ENCODE measurements at regions of chr11 and their contacts with region 1.

Region 1: GRCh38 chr11:65117216-65118096 is at the start of gene ZNHIT2:
- DNase-seq: peak; percentile 99 to 100
- ATAC-seq: peak; percentile 85 to 93 (median 90)
- H3K4me3 ChIP-seq: peak within 1 kb of the TSS; percentile 54 to 99 (median 91)
- H3K27ac ChIP-seq: peak within 1 kb of the TSS in 9 of 10 donors; percentile 66 to 95 (median 86)
- H3K4me1 ChIP-seq: peaks cover 17 to 72% (median 49%) of the 10 kb centered on the region in 9 donors
- H3K27me3 ChIP-seq: peaks cover 0 to 10% (median 0%) of the 10 kb centered on the region in 7 donors
- CTCF ChIP-seq: peak; percentile 79 to 99 (median 95)
- total RNA-seq, gene ZNHIT2: 4.3 to 8.3 (median 6.5) TPM

Region 2: DNA sequence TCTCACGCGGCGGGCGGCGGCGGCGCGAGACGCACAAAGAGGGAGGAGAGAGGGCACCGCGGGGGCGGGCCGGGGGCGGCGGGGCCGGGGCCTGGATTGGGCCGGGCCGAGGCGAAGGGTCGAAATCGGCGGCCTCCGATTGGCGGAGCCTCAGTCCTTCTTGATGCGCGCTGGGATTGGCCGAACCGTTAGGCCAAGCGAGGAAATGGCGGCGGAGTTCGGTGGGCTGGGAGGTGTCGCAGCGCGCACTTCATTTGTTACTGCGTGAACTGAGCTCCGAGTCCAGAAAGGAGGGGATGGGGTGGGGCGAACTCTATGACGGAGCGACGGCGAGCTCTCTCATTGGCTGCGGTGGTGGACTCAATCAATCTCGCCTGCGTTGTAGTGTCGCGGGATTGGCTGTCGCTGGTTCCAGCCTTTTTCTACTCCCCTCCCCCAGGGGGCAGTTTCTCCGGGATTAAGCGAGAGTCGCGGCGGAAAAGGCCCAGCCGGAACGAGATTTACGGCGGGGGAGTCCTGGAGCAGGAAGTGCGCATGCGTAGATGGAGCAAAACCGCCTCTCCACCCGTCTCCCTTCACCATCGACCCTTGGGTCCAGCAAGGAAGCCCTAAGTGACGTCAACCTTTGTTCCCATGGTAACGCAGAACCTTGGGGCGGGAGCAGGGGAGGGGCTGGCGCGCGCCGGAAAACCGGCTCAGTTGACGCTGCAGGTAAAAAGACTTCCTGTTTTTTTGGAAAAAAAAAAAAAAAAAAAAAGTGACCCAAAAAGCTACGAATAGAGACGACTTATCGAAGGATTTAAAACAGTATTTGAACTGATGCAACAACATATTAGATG is 338.7 kb before region 1 on chr11 and contains the start of gene SF1:
- intact Hi-C with region 1: loop called in 2 of 10 experiments (anchors 10 kb)
- DNase-seq: peak; percentile 96 to 100
- ATAC-seq: peak; percentile 94 to 97 (median 96)
- H3K4me3 ChIP-seq: peak within 1 kb of the TSS; percentile 65 to 99 (median 89)
- H3K27ac ChIP-seq: peak within 1 kb of the TSS; percentile 98 to 100 (median 100)
- H3K4me1 ChIP-seq: peaks cover 20 to 48% (median 42%) of the 10 kb centered on the region in 9 donors
- H3K27me3 ChIP-seq: no peaks in the 10 kb centered on the region
- CTCF ChIP-seq: peak in 6 of 9 donors; percentile 16 to 52 (median 36)
- total RNA-seq, gene SF1: 149 to 201 (median 165) TPM

Region 3: DNA sequence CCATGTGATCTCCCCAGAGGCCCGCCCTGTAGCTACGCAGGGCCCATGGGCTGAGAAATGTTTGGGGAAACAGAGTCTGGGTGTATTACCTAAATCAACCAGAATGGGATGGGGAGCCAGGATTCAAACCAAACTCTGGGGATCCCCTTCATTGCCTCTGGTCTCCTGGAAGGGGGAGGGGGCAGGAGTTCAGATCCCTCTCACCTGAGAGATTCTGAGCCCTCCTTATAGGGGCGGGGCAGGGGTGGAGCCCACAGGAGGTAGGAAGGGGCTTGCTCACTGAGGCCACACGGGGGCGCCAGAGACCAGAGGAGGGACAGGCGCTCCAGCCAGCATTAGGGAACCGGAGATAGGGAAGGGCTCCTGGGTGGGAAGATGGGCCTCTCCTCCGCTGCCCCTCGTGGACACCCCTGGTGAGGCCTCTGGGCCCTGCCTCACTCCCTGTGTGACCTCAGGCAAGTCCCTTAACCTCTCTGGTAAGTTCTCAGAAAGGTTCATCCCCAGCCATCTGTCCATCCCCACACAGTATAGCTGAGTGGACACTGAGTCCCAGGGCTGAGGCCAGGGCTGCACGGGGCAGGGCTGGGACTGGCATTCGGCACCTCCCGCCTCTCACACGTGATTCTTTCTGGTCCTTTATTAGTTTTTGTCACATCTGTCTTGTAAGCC is 270.3 kb before region 1 on chr11:
- intact Hi-C with region 1: loop called in 3 of 10 experiments (anchors 2 to 5 kb)
- DNase-seq: peak; percentile 93 to 96
- ATAC-seq: peak; percentile 82 to 91 (median 88)
- H3K4me3 ChIP-seq: no peak overlapping the region
- H3K27ac ChIP-seq: peak overlapping the region in 7 of 10 donors; percentile 42 to 96 (median 94)
- H3K4me1 ChIP-seq: peaks cover 32 to 66% (median 57%) of the 10 kb centered on the region in 9 donors
- H3K27me3 ChIP-seq: no peaks in the 10 kb centered on the region
- CTCF ChIP-seq: peak; percentile 97 to 100 (median 98)

Region 4: GRCh38 chr11:65013692-65014145 is 103.7 kb before region 1 on chr11:
- intact Hi-C with region 1: loop called in 6 of 10 experiments (anchors 2 to 10 kb)
- DNase-seq: peak; percentile 94
- ATAC-seq: peak; percentile 93 to 96 (median 96)
- H3K4me3 ChIP-seq: peak overlapping the region; percentile 57 to 92 (median 76)
- H3K27ac ChIP-seq: peak overlapping the region; percentile 87 to 100 (median 98)
- H3K4me1 ChIP-seq: peaks cover 11 to 34% (median 20%) of the 10 kb centered on the region in 9 donors
- H3K27me3 ChIP-seq: no peaks in the 10 kb centered on the region
- CTCF ChIP-seq: peak in 2 of 9 donors; percentile 61 to 63

Region 5: GRCh38 chr11:65083834-65084597 is 33.4 kb before region 1 on chr11 and contains the starts of genes CDCA5 and ZFPL1:
- intact Hi-C with region 1: loop called in 4 of 10 experiments (anchors 1 to 5 kb)
- DNase-seq: peak; percentile 95
- ATAC-seq: peak; percentile 94 to 98 (median 98)
- H3K4me3 ChIP-seq: peak within 1 kb of the TSS; percentile 64 to 93 (median 81)
- H3K27ac ChIP-seq: peak within 1 kb of the TSS; percentile 79 to 96 (median 92)
- H3K4me1 ChIP-seq: peaks cover 6 to 34% (median 20%) of the 10 kb centered on the region in 9 donors
- H3K27me3 ChIP-seq: no peaks in the 10 kb centered on the region
- CTCF ChIP-seq: no peak
- total RNA-seq, gene CDCA5: 0.50 to 5.3 (median 1.0) TPM
- total RNA-seq, gene ZFPL1: 21.5 to 27.7 (median 24.8) TPM

Measured in heart right ventricle (tissue), 16 donors.